Endothelial cell of umbilical vein (primary cell): ENCODE measurements at regions of chr4 and their contacts with region 1.

Region 1: DNA sequence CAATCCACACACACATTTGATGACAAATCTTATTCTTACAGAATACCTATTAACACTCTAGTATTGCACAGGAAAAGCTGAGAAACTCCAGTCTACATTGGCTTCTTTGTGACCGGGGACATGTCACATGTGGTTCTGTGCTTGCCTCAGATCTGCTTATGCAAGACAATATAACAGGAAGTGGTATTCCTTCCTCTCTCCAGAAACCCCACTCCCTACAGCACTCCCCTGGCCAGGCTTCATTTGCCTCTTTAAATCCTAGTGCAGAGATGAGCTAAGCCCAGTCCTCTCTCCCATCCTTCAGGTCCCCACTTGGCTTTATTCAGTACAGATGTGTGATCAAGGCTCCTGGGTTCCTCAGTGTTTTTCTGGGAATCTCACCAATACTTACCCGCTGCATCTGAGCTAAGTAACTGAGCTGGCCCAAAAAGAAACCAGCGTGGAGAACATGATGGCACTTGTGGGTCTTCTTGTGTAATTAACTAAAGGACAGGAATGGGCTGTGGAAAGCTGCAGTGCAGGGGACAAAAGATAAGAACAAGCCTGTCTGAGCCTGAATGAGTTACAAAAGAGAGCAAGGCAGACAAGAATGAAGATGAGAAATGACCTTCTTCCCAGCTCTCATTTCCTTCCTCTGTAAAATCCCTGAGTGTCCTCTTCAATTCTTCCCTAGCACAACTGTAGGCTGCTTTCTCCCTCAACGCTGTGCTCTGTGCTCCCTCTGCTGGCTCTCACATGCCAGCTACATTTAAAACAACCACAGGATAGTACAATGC is 105.6 kb downstream of the HNRNPD start:
- DNase-seq: peak; percentile 37
- H3K4me3 ChIP-seq: no peak overlapping the region
- H3K27ac ChIP-seq: no peak overlapping the region
- H3K4me1 ChIP-seq: no peaks in the 10 kb centered on the region
- H3K27me3 ChIP-seq: peaks cover 3% of the 10 kb centered on the region in 2 experiments
- CTCF ChIP-seq: peak; percentile 54 to 73
- POLR2A ChIP-seq: no peak

Region 2: GRCh38 chr4:81260443-81261101 is 1007.7 kb before region 1 on chr4:
- CTCF ChIA-PET with region 1: no interaction called
- POLR2A ChIA-PET with region 1: no interaction called
- dilution Hi-C with region 1: no loop called
- intact Hi-C with region 1: no loop called
- DNase-seq: no peak
- H3K4me3 ChIP-seq: no peak overlapping the region
- H3K27ac ChIP-seq: no peak overlapping the region
- H3K4me1 ChIP-seq: no peaks in the 10 kb centered on the region
- H3K27me3 ChIP-seq: no peaks in the 10 kb centered on the region
- CTCF ChIP-seq: no peak
- POLR2A ChIP-seq: no peak

Region 3: DNA sequence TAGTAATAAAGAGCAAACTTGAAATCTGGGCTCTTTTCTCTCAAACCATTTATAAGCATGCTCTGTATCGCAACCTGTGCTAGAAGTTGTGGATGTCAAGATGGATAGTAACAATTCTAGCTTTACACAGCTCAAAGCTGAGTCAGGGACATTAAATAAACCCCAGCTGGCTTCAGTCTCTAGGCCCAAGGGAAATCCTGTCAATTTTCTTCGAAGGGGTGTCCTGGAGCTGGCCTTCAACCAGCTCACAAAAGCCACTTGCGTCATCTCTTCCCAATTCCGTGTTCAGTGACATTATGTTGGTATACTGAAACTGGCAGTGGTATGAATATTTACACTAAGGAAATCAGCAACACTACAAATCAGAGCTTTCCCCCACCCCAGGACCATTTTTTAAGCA is 963.4 kb before region 1 on chr4:
- CTCF ChIA-PET with region 1: no interaction called
- POLR2A ChIA-PET with region 1: no interaction called
- dilution Hi-C with region 1: no loop called
- intact Hi-C with region 1: no loop called
- DNase-seq: no peak
- H3K4me3 ChIP-seq: no peak overlapping the region
- H3K27ac ChIP-seq: no peak overlapping the region
- H3K4me1 ChIP-seq: no peaks in the 10 kb centered on the region
- H3K27me3 ChIP-seq: no peaks in the 10 kb centered on the region
- CTCF ChIP-seq: no peak
- POLR2A ChIP-seq: no peak

Region 4: GRCh38 chr4:81465395-81466340 is 802.6 kb before region 1 on chr4:
- CTCF ChIA-PET with region 1: interaction called, 60 read pairs
- POLR2A ChIA-PET with region 1: no interaction called
- dilution Hi-C with region 1: no loop called
- intact Hi-C with region 1: loop called (anchors 1 kb)
- DNase-seq: no peak
- H3K4me3 ChIP-seq: no peak overlapping the region
- H3K27ac ChIP-seq: no peak overlapping the region
- H3K4me1 ChIP-seq: no peaks in the 10 kb centered on the region
- H3K27me3 ChIP-seq: peaks cover 16 to 18% of the 10 kb centered on the region in 2 experiments
- CTCF ChIP-seq: no peak
- POLR2A ChIP-seq: no peak

Region 5: GRCh38 chr4:82284858-82285805 is 16.9 kb after region 1 on chr4:
- CTCF ChIA-PET with region 1: interaction called, 23 read pairs
- POLR2A ChIA-PET with region 1: no interaction called
- dilution Hi-C with region 1: no loop called
- intact Hi-C with region 1: no loop called
- DNase-seq: peak; percentile 99
- H3K4me3 ChIP-seq: peak overlapping the region in 2 of 3 experiments; percentile 40 to 44
- H3K27ac ChIP-seq: no peak overlapping the region
- H3K4me1 ChIP-seq: peaks cover 6% of the 10 kb centered on the region
- H3K27me3 ChIP-seq: peaks cover 13 to 16% of the 10 kb centered on the region in 2 experiments
- CTCF ChIP-seq: peak; percentile 69 to 90
- POLR2A ChIP-seq: no peak